Right ventricle myocardium inferior (tissue), 1 donor: ENCODE measurements at regions of chr1 and their contacts with region 1.

Region 1: GRCh38 chr1:27525296-27526272 is 35.6 kb upstream of the WASF2 start:
- DNase-seq: peak; percentile 91
- ATAC-seq: peak; percentile 69

Region 2: GRCh38 chr1:27489910-27490741 is 35.5 kb before region 1 on chr1 and contains the start of gene WASF2:
- intact Hi-C with region 1: loop called (anchors 5 kb)
- DNase-seq: peak; percentile 98
- ATAC-seq: peak; percentile 96
- total RNA-seq, gene WASF2: 57.3 TPM

Region 3: GRCh38 chr1:27542408-27543273 is 17.1 kb after region 1 on chr1:
- intact Hi-C with region 1: loop called (anchors 2 kb)
- DNase-seq: peak; percentile 75
- ATAC-seq: peak; percentile 53

Region 4: DNA sequence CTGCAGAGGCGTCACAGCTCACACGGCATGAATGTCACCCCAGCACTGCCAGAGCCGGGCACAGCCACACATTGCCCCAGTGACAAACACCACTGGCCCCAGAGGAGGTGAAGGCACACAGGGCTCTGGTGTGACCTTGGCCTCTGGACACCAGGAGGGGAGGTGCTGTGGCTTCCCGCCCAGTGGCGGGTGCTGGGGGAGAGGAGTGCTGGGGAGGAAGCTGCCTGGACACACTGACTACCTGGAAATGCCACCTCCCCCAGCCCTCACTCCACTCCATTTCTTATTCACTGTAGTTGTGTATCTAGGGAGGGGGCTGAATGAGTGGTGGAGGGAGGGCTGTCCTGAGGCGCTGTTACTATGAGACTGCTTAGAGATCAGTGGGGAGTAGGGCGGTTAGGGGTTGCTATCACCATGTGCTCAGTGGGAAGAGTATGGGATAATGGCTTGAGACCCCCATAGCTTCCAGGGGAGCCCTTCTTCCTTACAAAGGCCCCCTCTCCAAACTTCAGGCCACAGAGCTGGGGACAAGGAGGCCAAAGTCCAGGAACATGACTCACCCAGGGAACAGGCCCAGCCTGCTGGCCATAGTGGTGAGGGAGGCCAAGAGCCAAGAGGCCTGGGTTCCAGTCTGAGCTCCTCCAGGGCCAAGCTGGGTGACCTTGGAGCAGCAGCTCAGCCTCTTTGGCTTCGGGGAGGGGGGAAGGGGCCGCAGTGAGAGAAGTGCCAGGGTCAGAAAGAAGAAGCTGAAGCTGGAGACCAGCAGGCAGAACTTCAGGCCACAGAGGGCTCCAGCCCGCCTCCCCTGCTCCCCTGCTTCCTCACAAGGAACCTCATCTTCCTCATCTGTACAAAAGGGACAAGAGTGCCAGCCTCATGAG is 38.2 kb after region 1 on chr1:
- intact Hi-C with region 1: loop called (anchors 5 kb)
- DNase-seq: peak; percentile 78
- ATAC-seq: peak; percentile 48